ENCODE measurements at regions of chr15 and their contacts with region 1.

Region 1: DNA sequence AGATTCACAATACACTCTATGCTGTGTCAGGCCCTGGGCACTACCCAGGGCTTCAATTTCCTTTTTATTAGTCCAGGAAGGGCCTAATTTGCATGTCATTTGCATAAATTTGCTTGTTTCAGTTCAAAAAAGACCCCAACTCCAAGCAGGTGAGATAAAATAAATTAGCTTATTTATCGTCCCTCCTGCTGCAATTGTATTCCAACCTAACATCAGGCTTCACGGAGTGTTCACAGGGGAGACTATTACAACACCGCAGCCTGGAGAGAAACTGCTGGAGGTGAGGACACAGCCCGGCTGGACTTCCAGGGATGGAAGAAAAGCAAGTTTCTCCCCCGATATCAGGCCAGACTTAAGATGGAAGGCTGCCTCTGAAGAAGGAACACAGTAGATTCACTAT is 62.8 kb downstream of the MEGF11 start:
- DNase-seq: no peak
- H3K4me3 ChIP-seq: no peak overlapping the region
- H3K27ac ChIP-seq: no peak overlapping the region
- H3K4me1 ChIP-seq: no peaks in the 10 kb centered on the region
- H3K27me3 ChIP-seq: peaks cover 4 to 8% of the 10 kb centered on the region in 2 experiments
- CTCF ChIP-seq: no peak
- POLR2A ChIP-seq: no peak

Region 2: GRCh38 chr15:65916664-65917406 is 273.9 kb before region 1 on chr15:
- CTCF ChIA-PET with region 1: interaction called, 3 read pairs
- POLR2A ChIA-PET with region 1: no interaction called
- dilution Hi-C with region 1: no loop called
- intact Hi-C with region 1: loop called (anchors 2 kb)
- DNase-seq: peak; percentile 52
- H3K4me3 ChIP-seq: no peak overlapping the region
- H3K27ac ChIP-seq: no peak overlapping the region
- H3K4me1 ChIP-seq: no peaks in the 10 kb centered on the region
- H3K27me3 ChIP-seq: no peaks in the 10 kb centered on the region
- CTCF ChIP-seq: peak; percentile 54 to 62
- POLR2A ChIP-seq: no peak

Region 3: GRCh38 chr15:65980824-65981456 is 209.8 kb before region 1 on chr15:
- CTCF ChIA-PET with region 1: interaction called, 3 read pairs
- POLR2A ChIA-PET with region 1: no interaction called
- dilution Hi-C with region 1: no loop called
- intact Hi-C with region 1: loop called (anchors 2 kb)
- DNase-seq: peak; percentile 52
- H3K4me3 ChIP-seq: no peak overlapping the region
- H3K27ac ChIP-seq: no peak overlapping the region
- H3K4me1 ChIP-seq: no peaks in the 10 kb centered on the region
- H3K27me3 ChIP-seq: peaks cover 23 to 30% of the 10 kb centered on the region in 2 experiments
- CTCF ChIP-seq: peak; percentile 58 to 68
- POLR2A ChIP-seq: no peak

Measured in endothelial cell of umbilical vein (primary cell).